HCT116 (cell line): ENCODE measurements at regions of chr12 and their contacts with region 1.

Region 1: GRCh38 chr12:64890873-64891468 is 66.5 kb downstream of the TBC1D30 start:
- DNase-seq: peak; percentile 51
- ATAC-seq: peak; percentile 84
- H3K4me3 ChIP-seq: no peak overlapping the region
- H3K27ac ChIP-seq: no peak overlapping the region
- H3K4me1 ChIP-seq: peaks cover 0 to 6% of the 10 kb centered on the region in 2 experiments; a peak in 1 of 4 replicates
- H3K27me3 ChIP-seq: no peaks in the 10 kb centered on the region
- CTCF ChIP-seq: peak; percentile 60 to 84 (median 80)
- POLR2A ChIP-seq: no peak
- RAD21 ChIP-seq: peak; percentile 95

Region 2: GRCh38 chr12:65106948-65107347 is 216.0 kb after region 1 on chr12:
- CTCF ChIA-PET with region 1: interaction called, 23 read pairs
- POLR2A ChIA-PET with region 1: no interaction called
- RAD21 ChIA-PET with region 1: interaction called in 1 of 2 experiments, 3 read pairs
- intact Hi-C with region 1: loop called (anchors 1 kb)
- DNase-seq: no peak
- ATAC-seq: no peak
- H3K4me3 ChIP-seq: no peak overlapping the region
- H3K27ac ChIP-seq: no peak overlapping the region
- H3K4me1 ChIP-seq: no peaks in the 10 kb centered on the region
- H3K27me3 ChIP-seq: no peaks in the 10 kb centered on the region
- CTCF ChIP-seq: peak; percentile 26 to 51 (median 29); a peak in 3 of 6 replicates
- POLR2A ChIP-seq: no peak
- RAD21 ChIP-seq: peak; percentile 27; the same call in 1 of the 2 replicates

Region 3: DNA sequence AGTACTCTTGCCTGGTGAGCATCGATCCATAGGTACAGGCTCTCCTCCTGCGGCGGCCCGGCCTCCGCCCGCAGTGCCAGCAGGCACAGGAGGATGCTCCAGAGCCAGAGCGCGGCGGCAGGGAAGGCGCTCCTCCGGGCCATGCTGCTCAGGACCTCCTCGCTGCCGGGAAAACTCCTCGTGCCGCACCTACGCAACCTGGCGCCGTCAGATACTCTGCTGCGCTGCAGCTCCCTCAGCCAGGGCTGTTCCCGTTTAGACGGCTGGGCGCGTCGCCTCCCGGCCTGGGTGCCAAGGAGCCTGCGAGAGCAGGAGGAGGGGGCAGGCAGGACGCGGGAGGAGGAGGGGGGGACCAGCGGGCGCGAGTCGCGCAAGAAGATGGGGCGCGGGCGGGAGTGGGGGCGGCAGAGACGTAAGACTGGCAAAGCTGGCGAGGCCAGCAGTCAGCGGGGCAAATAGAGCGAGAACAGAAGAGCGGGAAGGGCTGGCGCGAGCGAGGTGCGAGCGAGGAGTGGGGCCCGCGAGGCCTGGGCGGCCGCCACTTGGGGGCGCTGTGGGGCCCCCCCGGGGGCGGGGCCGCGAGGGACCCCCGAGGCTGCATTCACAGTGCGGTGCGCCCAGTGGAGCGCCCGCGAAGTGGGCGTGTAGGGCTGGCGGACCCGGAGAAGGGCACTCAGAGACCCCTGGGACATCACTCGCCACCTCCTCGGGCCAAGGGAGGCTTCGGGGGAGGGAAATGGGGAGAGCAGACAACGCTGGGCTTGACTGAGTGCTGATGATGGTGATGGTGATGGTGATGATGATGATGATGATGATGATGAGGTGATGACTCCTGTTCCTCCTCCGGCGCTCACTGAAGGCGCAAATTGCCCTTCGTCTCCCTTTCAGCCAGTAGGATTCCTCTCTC is 230.3 kb after region 1 on chr12 and contains the start of gene WIF1:
- CTCF ChIA-PET with region 1: interaction called, 7 read pairs
- POLR2A ChIA-PET with region 1: no interaction called
- RAD21 ChIA-PET with region 1: no interaction called
- intact Hi-C with region 1: loop called (anchors 1 kb)
- DNase-seq: no peak
- ATAC-seq: 0 out of 2 replicates have a peak, but pooled peaks have one; percentile 38
- H3K4me3 ChIP-seq: no peak within 1 kb of the TSS
- H3K27ac ChIP-seq: no peak within 1 kb of the TSS
- H3K4me1 ChIP-seq: no peaks in the 10 kb centered on the region
- H3K27me3 ChIP-seq: peaks cover 34% of the 10 kb centered on the region
- CTCF ChIP-seq: peak in 2 of 3 experiments; percentile 26 to 44; a peak in 3 of 6 replicates
- POLR2A ChIP-seq: no peak
- RAD21 ChIP-seq: no peak
- total RNA-seq, gene WIF1: not detected

Region 4: DNA sequence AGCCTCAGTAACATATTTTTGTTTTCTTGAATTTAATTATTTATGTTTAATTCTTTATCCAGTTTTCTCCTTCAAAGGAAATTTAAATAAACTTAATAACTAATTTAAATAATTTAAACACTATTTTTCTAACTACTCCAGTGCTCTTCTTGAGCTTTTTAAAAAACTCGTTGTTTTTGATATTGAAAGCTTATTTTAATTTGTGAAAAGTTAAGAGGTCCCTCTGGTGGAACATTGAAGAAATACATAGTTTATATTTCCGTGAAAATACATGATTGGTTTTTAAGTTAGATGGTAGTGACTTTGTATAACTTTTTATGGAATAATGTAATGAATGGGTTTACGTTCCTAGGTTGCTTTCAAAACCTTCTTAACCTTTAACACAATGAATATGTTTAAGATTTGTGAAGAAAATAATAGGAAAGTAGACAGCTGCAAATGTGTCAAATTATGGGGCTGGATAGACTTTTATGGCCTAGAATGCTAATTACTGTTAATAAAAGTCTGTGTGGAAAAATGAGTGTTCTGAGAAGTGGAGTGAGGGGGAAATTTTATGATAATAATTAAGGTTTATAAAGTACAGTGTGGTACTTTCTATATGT is 341.6 kb after region 1 on chr12:
- CTCF ChIA-PET with region 1: interaction called, 10 read pairs
- POLR2A ChIA-PET with region 1: no interaction called
- RAD21 ChIA-PET with region 1: no interaction called
- intact Hi-C with region 1: loop called (anchors 2 kb)
- DNase-seq: no peak
- ATAC-seq: no peak
- H3K4me3 ChIP-seq: no peak overlapping the region
- H3K27ac ChIP-seq: no peak overlapping the region
- H3K4me1 ChIP-seq: peaks cover 0 to 9% of the 10 kb centered on the region in 2 experiments; a peak in 2 of 4 replicates
- H3K27me3 ChIP-seq: no peaks in the 10 kb centered on the region
- CTCF ChIP-seq: peak; percentile 18 to 52 (median 18); a peak in 3 of 6 replicates
- POLR2A ChIP-seq: no peak
- RAD21 ChIP-seq: peak; percentile 30

Region 5: DNA sequence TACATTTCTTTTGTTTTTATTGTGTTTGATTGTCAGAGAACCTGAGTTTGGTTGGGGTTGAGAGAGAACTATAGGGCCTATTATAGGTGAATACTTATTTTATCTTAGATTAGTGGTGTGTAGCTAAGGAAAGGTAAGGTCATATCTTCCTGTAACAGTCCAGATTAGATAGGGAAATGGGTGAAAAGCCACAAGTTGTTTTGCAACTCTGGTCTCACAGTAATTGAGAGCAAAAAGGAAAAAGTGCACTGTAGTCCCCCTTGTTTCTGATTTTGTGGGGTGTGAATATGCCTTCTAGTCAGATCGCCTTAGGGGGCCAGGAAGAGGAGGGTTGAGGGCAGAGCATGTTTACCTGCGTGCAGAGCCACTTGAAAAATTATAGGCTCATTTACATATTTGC is 396.5 kb after region 1 on chr12:
- CTCF ChIA-PET with region 1: no interaction called
- POLR2A ChIA-PET with region 1: no interaction called
- RAD21 ChIA-PET with region 1: no interaction called
- intact Hi-C with region 1: loop called (anchors 5 kb)
- DNase-seq: no peak
- ATAC-seq: no peak
- H3K4me3 ChIP-seq: no peak overlapping the region
- H3K27ac ChIP-seq: no peak overlapping the region
- H3K4me1 ChIP-seq: no peaks in the 10 kb centered on the region
- H3K27me3 ChIP-seq: no peaks in the 10 kb centered on the region
- CTCF ChIP-seq: no peak
- POLR2A ChIP-seq: no peak
- RAD21 ChIP-seq: no peak

Region 6: DNA sequence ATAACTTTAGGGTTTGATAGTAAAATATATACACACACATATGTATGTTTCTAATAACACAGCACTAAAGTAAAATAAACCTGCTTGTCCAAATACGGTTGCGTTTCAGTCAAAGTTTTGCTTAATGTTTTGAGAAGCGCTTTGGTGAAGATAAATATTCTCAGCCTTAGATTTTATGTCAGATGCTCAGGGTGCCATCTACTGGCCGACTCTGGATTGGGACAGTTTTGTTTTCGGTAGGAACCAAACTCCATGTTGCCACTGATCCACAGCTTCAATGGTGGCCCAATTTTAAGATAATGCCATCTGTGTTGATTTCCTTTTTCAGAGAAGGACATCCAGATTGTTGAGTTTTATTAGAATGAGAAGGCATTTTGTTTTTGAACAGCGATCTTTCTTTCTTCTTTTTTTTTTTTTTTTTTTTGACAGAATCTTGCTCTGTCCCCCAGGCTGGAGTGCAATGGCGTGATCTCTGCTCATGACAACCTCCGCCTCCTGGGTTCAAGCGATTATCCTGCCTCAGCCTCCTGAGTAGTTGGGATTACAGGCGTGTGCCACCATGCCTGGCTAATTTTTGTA is 1196.5 kb after region 1 on chr12:
- CTCF ChIA-PET with region 1: no interaction called
- POLR2A ChIA-PET with region 1: no interaction called
- RAD21 ChIA-PET with region 1: no interaction called
- intact Hi-C with region 1: loop called (anchors 1 kb)
- DNase-seq: peak; percentile 68
- ATAC-seq: peak; percentile 91
- H3K4me3 ChIP-seq: no peak overlapping the region
- H3K27ac ChIP-seq: no peak overlapping the region
- H3K4me1 ChIP-seq: peaks cover 0 to 14% of the 10 kb centered on the region in 2 experiments; a peak in 1 of 4 replicates
- H3K27me3 ChIP-seq: no peaks in the 10 kb centered on the region
- CTCF ChIP-seq: peak; percentile 75 to 97 (median 90)
- POLR2A ChIP-seq: no peak
- RAD21 ChIP-seq: peak; percentile 95

Region 7: GRCh38 chr12:66107451-66107915 is 1216.5 kb after region 1 on chr12:
- CTCF ChIA-PET with region 1: no interaction called
- POLR2A ChIA-PET with region 1: no interaction called
- RAD21 ChIA-PET with region 1: no interaction called
- intact Hi-C with region 1: loop called (anchors 5 kb)
- DNase-seq: peak; percentile 93
- ATAC-seq: peak; percentile 92
- H3K4me3 ChIP-seq: no peak overlapping the region
- H3K27ac ChIP-seq: peak overlapping the region; percentile 5; the same call in 1 of the 2 replicates
- H3K4me1 ChIP-seq: peaks cover 4 to 11% of the 10 kb centered on the region in 2 experiments; a peak in 3 of 4 replicates
- H3K27me3 ChIP-seq: no peaks in the 10 kb centered on the region
- CTCF ChIP-seq: peak; percentile 81 to 91 (median 83)
- POLR2A ChIP-seq: no peak
- RAD21 ChIP-seq: peak; percentile 90